ENCODE measurements at regions of chr1 and their contacts with region 1.

Region 1: GRCh38 chr1:154485106-154485505 is 16.9 kb upstream of the TDRD10 start:
- DNase-seq: no peak

Region 2: GRCh38 chr1:154431586-154432373 is 53.3 kb before region 1 on chr1:
- CTCF ChIA-PET with region 1: no interaction called
- POLR2A ChIA-PET with region 1: no interaction called
- DNase-seq: no peak

Region 3: GRCh38 chr1:154501423-154502065 is 16.4 kb after region 1 on chr1:
- CTCF ChIA-PET with region 1: no interaction called
- POLR2A ChIA-PET with region 1: no interaction called
- DNase-seq: no peak

Region 4: GRCh38 chr1:154546264-154547063 is 61.4 kb after region 1 on chr1:
- CTCF ChIA-PET with region 1: interaction called, 47 read pairs
- POLR2A ChIA-PET with region 1: no interaction called
- DNase-seq: peak; percentile 89

Measured in HEK293T (cell line).